Stomach (tissue), 19 donors: ENCODE measurements at regions of chr14 and their contacts with region 1.

Region 1: DNA sequence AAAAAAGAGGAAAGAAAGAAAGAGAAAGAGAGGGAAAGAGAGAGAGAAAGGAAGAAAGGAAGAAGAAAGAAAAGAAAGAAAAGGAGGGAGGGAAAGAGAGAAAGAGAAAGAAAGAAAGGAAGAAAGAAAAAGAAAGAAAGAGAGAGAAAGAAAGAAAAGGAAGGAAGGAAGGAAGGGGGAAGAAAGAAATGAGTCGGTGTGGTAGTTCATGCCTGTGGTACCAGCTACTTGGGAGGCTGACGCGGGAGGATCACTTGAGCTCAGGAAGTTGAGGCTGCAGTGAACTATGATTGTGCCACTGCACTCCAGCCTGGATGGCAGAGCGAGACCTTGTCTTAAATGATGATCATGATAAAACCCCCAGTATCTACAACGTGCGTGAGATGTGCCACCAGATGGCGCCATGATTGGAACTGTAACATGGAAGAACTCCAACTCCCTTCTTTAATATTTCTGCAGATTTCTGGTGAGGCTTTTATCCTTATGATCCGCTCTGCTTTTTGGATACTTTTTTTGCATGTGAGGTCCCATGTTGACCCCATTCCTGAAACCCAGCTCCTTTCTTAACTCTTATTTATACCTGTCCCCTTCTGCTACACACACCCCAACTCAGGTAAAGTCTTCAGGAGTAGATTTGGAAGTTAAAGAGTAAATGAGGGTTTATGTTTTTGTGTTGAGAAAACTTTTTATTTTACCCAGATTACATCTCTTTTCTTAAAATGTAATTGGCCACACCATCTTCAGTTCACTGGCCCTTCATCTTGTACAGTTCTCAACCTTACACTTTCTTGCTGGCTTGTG is 25.6 kb downstream of the RNASE10 start:
- DNase-seq: peak; percentile 73 to 84
- H3K4me3 ChIP-seq: no peak overlapping the region
- H3K27ac ChIP-seq: no peak overlapping the region
- H3K4me1 ChIP-seq: peaks cover 0 to 8% (median 2%) of the 10 kb centered on the region in 4 donors
- H3K27me3 ChIP-seq: no peaks in the 10 kb centered on the region
- CTCF ChIP-seq: peak in 4 of 7 experiments; percentile 45 to 60 (median 52)
- EP300 ChIP-seq: no peak
- POLR2A ChIP-seq: no peak

Region 2: GRCh38 chr14:20559461-20559904 is 28.5 kb after region 1 on chr14:
- intact Hi-C with region 1: no loop called
- DNase-seq: no peak
- H3K4me3 ChIP-seq: no peak overlapping the region
- H3K27ac ChIP-seq: no peak overlapping the region
- H3K4me1 ChIP-seq: no peaks in the 10 kb centered on the region
- H3K27me3 ChIP-seq: no peaks in the 10 kb centered on the region
- CTCF ChIP-seq: no peak
- EP300 ChIP-seq: no peak
- POLR2A ChIP-seq: no peak

Region 3: GRCh38 chr14:20609215-20610001 is 78.4 kb after region 1 on chr14:
- intact Hi-C with region 1: loop called (anchors 10 kb)
- DNase-seq: peak; percentile 76 to 93
- H3K4me3 ChIP-seq: peak overlapping the region; percentile 87 to 94 (median 91)
- H3K27ac ChIP-seq: peak overlapping the region; percentile 67 to 89 (median 80)
- H3K4me1 ChIP-seq: peaks cover 9 to 51% (median 37%) of the 10 kb centered on the region in 4 donors
- H3K27me3 ChIP-seq: no peaks in the 10 kb centered on the region
- CTCF ChIP-seq: peak in 5 of 7 experiments; percentile 74 to 98 (median 91)
- EP300 ChIP-seq: no peak
- POLR2A ChIP-seq: no peak